Activated CD8-positive, alpha-beta T cell treated with anti-CD3 and anti-CD28 coated beads for 36 hours (primary cell): ENCODE measurements at regions of chr15 and their contacts with region 1.

Region 1: GRCh38 chr15:77543159-77543882 is 89.4 kb downstream of the LINGO1 start:
- DNase-seq: peak; percentile 84
- ATAC-seq: peak; percentile 94
- H3K4me3 Mint-ChIP-seq: peak overlapping the region; percentile 74
- H3K27ac Mint-ChIP-seq: peak overlapping the region; percentile 69
- H3K4me1 Mint-ChIP-seq: peaks cover 7% of the 10 kb centered on the region
- H3K27me3 Mint-ChIP-seq: peaks cover 3% of the 10 kb centered on the region
- CTCF ChIP-seq: peak; percentile 98

Region 2: GRCh38 chr15:77094397-77095030 is 448.8 kb before region 1 on chr15:
- CTCF ChIA-PET with region 1: interaction called, 10 read pairs
- POLR2A ChIA-PET with region 1: no interaction called
- intact Hi-C with region 1: no loop called
- DNase-seq: peak; percentile 34
- ATAC-seq: peak; percentile 37
- H3K4me3 Mint-ChIP-seq: no peak overlapping the region
- H3K27ac Mint-ChIP-seq: no peak overlapping the region
- H3K4me1 Mint-ChIP-seq: no peaks in the 10 kb centered on the region
- H3K27me3 Mint-ChIP-seq: no peaks in the 10 kb centered on the region
- CTCF ChIP-seq: peak; percentile 36

Region 3: GRCh38 chr15:77118882-77119321 is 424.4 kb before region 1 on chr15:
- CTCF ChIA-PET with region 1: interaction called, 78 read pairs
- POLR2A ChIA-PET with region 1: no interaction called
- intact Hi-C with region 1: loop called (anchors 5 kb)
- DNase-seq: peak; percentile 61
- ATAC-seq: peak; percentile 67
- H3K4me3 Mint-ChIP-seq: no peak overlapping the region
- H3K27ac Mint-ChIP-seq: no peak overlapping the region
- H3K4me1 Mint-ChIP-seq: peaks cover 12% of the 10 kb centered on the region
- H3K27me3 Mint-ChIP-seq: no peaks in the 10 kb centered on the region
- CTCF ChIP-seq: peak; percentile 83

Region 4: GRCh38 chr15:77179541-77179998 is 363.8 kb before region 1 on chr15:
- CTCF ChIA-PET with region 1: interaction called, 20 read pairs
- POLR2A ChIA-PET with region 1: no interaction called
- intact Hi-C with region 1: no loop called
- DNase-seq: peak; percentile 40
- ATAC-seq: peak; percentile 67
- H3K4me3 Mint-ChIP-seq: no peak overlapping the region
- H3K27ac Mint-ChIP-seq: peak overlapping the region; percentile 82
- H3K4me1 Mint-ChIP-seq: peaks cover 46% of the 10 kb centered on the region
- H3K27me3 Mint-ChIP-seq: no peaks in the 10 kb centered on the region
- CTCF ChIP-seq: no peak

Region 5: GRCh38 chr15:77482570-77482969 is 60.8 kb before region 1 on chr15:
- CTCF ChIA-PET with region 1: interaction called, 12 read pairs
- POLR2A ChIA-PET with region 1: no interaction called
- intact Hi-C with region 1: no loop called
- DNase-seq: no peak
- ATAC-seq: no peak
- H3K4me3 Mint-ChIP-seq: no peak overlapping the region
- H3K27ac Mint-ChIP-seq: no peak overlapping the region
- H3K4me1 Mint-ChIP-seq: peaks cover 14% of the 10 kb centered on the region
- H3K27me3 Mint-ChIP-seq: no peaks in the 10 kb centered on the region
- CTCF ChIP-seq: no peak

Region 6: DNA sequence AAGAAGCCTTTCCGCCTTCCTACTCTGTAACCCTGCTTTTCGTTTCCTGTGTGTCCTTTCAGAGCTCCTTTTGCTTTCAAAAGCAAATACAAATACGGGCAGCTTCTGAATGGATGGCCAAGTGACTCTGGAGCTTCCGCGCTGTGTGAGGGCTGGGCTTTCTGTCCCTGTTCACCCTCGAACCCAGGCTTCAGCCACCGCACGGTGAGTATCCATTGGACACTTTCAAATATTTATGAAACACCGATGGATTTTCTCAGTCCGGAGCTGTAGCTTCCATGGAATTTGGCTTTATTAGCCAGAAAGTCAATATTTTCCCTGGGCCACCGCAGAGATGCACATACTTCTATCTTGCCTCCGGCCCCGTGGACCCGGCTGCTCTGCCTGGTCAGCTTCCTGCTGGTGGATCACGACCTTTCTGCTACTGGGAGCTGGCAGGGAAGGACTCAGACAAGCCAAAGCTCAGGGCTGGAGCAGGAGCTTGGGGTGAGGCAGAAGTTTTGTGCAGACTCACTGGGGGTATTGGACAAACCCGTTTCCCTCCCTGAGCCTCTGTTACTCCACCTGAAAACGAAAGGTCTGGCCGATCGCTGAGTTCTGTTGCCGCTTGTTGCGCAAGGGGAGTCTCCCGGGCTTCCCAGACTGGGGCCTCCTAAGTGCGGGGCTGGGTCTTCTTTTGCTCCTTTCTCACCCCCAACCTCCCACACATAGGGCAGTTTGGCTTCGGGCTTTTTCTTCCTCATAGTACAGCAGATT is 25.8 kb after region 1 on chr15:
- CTCF ChIA-PET with region 1: interaction called, 11 read pairs
- POLR2A ChIA-PET with region 1: no interaction called
- intact Hi-C with region 1: no loop called
- DNase-seq: no peak
- ATAC-seq: no peak
- H3K4me3 Mint-ChIP-seq: no peak overlapping the region
- H3K27ac Mint-ChIP-seq: no peak overlapping the region
- H3K4me1 Mint-ChIP-seq: no peaks in the 10 kb centered on the region
- H3K27me3 Mint-ChIP-seq: no peaks in the 10 kb centered on the region
- CTCF ChIP-seq: no peak